Posterior vena cava (tissue), 2 donors: ENCODE measurements at regions of chr14 and their contacts with region 1.

Region 1: GRCh38 chr14:63088865-63089264 is 43.6 kb upstream of the KCNH5 start:
- DNase-seq: no peak

Region 2: DNA sequence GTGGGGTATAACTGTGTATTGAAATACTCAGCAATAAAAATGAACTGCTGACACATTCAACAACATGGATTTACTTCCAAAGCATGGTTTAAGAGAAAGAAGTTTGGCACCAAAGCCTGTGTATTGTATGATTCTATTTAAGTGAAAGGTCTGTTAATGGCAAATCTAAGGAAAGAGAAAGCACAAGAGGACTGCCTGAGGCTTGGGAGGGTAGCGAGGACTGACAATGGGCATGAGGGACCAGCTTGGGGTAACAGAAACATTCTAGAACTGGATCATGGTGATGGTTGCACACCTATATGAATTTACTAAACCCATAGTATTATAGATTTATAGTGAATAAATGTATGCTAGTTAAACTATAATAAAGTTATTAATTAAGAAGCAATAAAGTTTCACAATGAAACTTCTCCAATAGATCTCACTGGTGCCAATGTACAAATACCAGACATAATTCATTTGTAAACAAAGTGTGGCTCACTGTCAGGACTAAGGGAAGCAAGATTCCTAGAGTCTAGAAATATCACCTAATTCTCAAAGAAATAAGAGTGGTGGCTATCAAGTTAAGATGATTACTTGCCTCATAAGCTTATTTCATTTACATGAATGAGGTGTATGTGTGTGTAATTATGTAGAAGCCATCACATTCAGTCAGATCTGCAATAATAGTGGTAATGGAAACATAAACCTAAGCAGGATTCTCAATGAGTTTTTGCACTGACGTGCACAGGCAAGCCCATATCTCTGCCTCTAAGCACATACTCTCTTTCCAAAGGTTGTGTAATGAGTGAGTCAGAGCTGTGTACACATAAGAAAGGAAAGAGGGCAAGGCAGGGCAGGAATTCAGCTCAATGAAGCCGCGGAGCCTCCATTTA is 397.0 kb before region 1 on chr14:
- intact Hi-C with region 1: no loop called
- DNase-seq: no peak

Region 3: DNA sequence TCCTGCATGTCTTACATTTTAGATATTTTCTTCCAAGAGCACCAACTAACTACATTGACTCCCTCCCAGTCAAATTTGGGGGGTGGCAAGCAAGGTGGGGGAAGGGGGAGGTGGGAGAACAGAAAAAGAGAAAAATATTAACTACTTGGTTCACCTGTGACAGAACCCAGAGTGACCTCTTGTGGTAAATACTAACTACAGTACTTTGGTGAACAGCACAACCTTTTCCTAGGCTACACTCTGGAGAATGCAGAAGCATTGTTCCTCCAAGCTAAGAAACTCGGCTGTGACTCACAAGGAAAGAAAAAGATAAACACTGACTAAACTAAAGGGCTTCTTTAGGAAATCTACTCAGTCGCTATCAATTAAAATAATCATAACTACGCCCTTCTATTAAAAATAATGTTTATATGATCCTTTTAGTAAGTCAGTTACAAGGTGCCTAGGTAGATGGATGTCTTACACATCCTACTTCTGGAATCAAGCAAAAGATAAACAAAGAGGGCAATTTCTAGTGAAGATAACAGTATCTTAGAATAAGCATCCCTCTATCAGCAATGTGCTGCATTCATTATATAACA is 49.0 kb before region 1 on chr14:
- intact Hi-C with region 1: loop called in 1 of 2 experiments (anchors 5 kb)
- DNase-seq: no peak